H1 (cell line): ENCODE measurements at regions of chr1 and their contacts with region 1.

Region 1: GRCh38 chr1:43763497-43763973 is 56.2 kb downstream of the ST3GAL3 start:
- DNase-seq: peak; percentile 39 to 63
- H3K4me3 ChIP-seq: no peak overlapping the region
- H3K27ac ChIP-seq: no peak overlapping the region
- H3K4me1 ChIP-seq: peaks cover 7 to 24% (median 21%) of the 10 kb centered on the region in 4 experiments
- H3K27me3 ChIP-seq: no peaks in the 10 kb centered on the region
- CTCF ChIP-seq: peak; percentile 26 to 93 (median 90)
- EP300 ChIP-seq: no peak
- POLR2A ChIP-seq: no peak
- RAD21 ChIP-seq: peak; percentile 99

Region 2: DNA sequence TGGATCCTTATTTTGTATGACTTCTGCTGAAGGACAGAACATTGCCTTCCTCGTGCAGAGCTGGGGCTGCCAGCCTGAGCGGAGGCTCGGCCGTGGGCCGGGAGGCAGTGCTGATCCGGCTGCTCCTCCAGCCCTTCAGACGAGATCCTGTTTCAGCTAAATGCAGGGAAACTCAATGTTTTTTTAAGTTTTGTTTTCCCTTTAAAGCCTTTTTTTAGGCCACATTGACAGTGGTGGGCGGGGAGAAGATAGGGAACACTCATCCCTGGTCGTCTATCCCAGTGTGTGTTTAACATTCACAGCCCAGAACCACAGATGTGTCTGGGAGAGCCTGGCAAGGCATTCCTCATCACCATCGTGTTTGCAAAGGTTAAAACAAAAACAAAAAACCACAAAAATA is 141.1 kb before region 1 on chr1:
- CTCF ChIA-PET with region 1: no interaction called
- POLR2A ChIA-PET with region 1: no interaction called
- DNase-seq: no peak
- H3K4me3 ChIP-seq: no peak overlapping the region
- H3K27ac ChIP-seq: no peak overlapping the region
- H3K4me1 ChIP-seq: no peaks in the 10 kb centered on the region
- H3K27me3 ChIP-seq: no peaks in the 10 kb centered on the region
- CTCF ChIP-seq: no peak
- EP300 ChIP-seq: no peak
- POLR2A ChIP-seq: no peak
- RAD21 ChIP-seq: no peak

Region 3: GRCh38 chr1:43659212-43660166 is 104.0 kb before region 1 on chr1:
- CTCF ChIA-PET with region 1: no interaction called
- POLR2A ChIA-PET with region 1: no interaction called
- DNase-seq: peak in 1 of 2 experiments; percentile 57
- H3K4me3 ChIP-seq: peak overlapping the region in 1 of 4 experiments; percentile 37; a peak in 2 of 8 replicates
- H3K27ac ChIP-seq: peak overlapping the region; percentile 55
- H3K4me1 ChIP-seq: peaks cover 3 to 14% (median 11%) of the 10 kb centered on the region in 4 experiments; a peak in 6 of 7 replicates
- H3K27me3 ChIP-seq: no peaks in the 10 kb centered on the region
- CTCF ChIP-seq: no peak
- EP300 ChIP-seq: no peak
- POLR2A ChIP-seq: no peak
- RAD21 ChIP-seq: no peak; a peak in 1 of 4 replicates

Region 4: GRCh38 chr1:43750083-43750482 is 13.5 kb before region 1 on chr1:
- CTCF ChIA-PET with region 1: interaction called, 19 read pairs
- POLR2A ChIA-PET with region 1: interaction called, 3 read pairs
- DNase-seq: no peak
- H3K4me3 ChIP-seq: no peak overlapping the region
- H3K27ac ChIP-seq: no peak overlapping the region
- H3K4me1 ChIP-seq: no peaks in the 10 kb centered on the region
- H3K27me3 ChIP-seq: no peaks in the 10 kb centered on the region
- CTCF ChIP-seq: no peak
- EP300 ChIP-seq: no peak
- POLR2A ChIP-seq: no peak
- RAD21 ChIP-seq: no peak

Region 5: DNA sequence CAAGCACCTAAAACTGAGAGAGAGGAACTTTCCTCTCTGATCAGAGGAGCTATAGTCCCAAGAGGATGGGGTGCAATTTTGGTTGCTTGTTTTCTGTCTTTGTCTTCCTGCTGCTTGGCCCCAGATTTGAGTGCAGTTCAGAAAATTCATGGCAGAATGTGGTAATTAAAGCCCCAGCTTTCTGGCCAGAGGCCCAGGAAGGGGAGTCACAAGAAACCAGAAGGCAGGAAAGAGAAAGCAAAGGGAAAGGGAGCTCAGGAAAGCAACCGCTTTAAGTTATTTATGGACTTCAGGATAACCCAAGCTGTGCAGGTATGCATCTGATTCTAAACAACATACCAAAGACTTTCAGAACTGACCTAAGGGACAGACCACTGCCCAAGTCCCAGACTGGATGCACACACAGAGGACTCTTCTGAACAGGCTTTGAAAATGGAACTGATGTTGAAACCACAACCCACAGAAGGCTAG is 32.6 kb after region 1 on chr1:
- CTCF ChIA-PET with region 1: interaction called, 11 read pairs
- POLR2A ChIA-PET with region 1: interaction called, 3 read pairs
- DNase-seq: no peak
- H3K4me3 ChIP-seq: no peak overlapping the region
- H3K27ac ChIP-seq: no peak overlapping the region
- H3K4me1 ChIP-seq: no peaks in the 10 kb centered on the region
- H3K27me3 ChIP-seq: no peaks in the 10 kb centered on the region
- CTCF ChIP-seq: no peak
- EP300 ChIP-seq: no peak
- POLR2A ChIP-seq: no peak
- RAD21 ChIP-seq: no peak

Region 6: GRCh38 chr1:43806183-43806582 is 42.6 kb after region 1 on chr1:
- CTCF ChIA-PET with region 1: no interaction called
- POLR2A ChIA-PET with region 1: no interaction called
- DNase-seq: no peak
- H3K4me3 ChIP-seq: no peak overlapping the region
- H3K27ac ChIP-seq: no peak overlapping the region
- H3K4me1 ChIP-seq: peaks cover 0 to 4% (median 0%) of the 10 kb centered on the region in 4 experiments; a peak in 3 of 7 replicates
- H3K27me3 ChIP-seq: no peaks in the 10 kb centered on the region
- CTCF ChIP-seq: no peak
- EP300 ChIP-seq: no peak
- POLR2A ChIP-seq: no peak
- RAD21 ChIP-seq: no peak

Region 7: GRCh38 chr1:43881415-43881814 is 117.9 kb after region 1 on chr1:
- CTCF ChIA-PET with region 1: interaction called, 11 read pairs
- POLR2A ChIA-PET with region 1: interaction called, 4 read pairs
- DNase-seq: no peak
- H3K4me3 ChIP-seq: no peak overlapping the region
- H3K27ac ChIP-seq: no peak overlapping the region
- H3K4me1 ChIP-seq: peaks cover 7 to 17% (median 12%) of the 10 kb centered on the region in 4 experiments
- H3K27me3 ChIP-seq: no peaks in the 10 kb centered on the region; a peak in 1 of 7 replicates
- CTCF ChIP-seq: peak; percentile 2 to 40 (median 2); a peak in 2 of 4 replicates
- EP300 ChIP-seq: no peak
- POLR2A ChIP-seq: no peak
- RAD21 ChIP-seq: peak in 1 of 2 experiments; percentile 39; a peak in 2 of 4 replicates

Region 8: DNA sequence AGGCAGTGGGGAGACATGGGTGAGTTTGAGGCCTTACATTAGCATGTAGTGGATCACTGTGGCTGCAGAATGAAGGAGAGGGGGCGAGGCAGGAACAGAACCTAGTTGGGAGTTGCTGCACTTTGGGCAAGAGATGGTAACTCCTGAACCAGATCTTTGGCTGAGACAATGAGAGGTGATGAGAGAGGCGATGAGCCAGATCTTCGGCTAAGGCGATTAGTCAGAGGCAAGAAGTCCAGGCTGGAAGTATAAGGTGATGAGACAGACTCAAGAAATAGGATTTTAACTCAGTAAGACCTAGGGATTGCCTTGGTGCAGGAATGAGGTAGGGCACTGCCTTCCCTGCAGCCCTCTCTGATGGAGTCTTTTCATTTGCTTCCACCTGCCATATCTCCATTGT is 161.0 kb after region 1 on chr1:
- CTCF ChIA-PET with region 1: interaction called, 618 read pairs
- POLR2A ChIA-PET with region 1: interaction called, 89 read pairs
- DNase-seq: no peak
- H3K4me3 ChIP-seq: no peak overlapping the region
- H3K27ac ChIP-seq: no peak overlapping the region
- H3K4me1 ChIP-seq: no peaks in the 10 kb centered on the region
- H3K27me3 ChIP-seq: no peaks in the 10 kb centered on the region
- CTCF ChIP-seq: no peak
- EP300 ChIP-seq: no peak
- POLR2A ChIP-seq: no peak
- RAD21 ChIP-seq: no peak

Region 9: DNA sequence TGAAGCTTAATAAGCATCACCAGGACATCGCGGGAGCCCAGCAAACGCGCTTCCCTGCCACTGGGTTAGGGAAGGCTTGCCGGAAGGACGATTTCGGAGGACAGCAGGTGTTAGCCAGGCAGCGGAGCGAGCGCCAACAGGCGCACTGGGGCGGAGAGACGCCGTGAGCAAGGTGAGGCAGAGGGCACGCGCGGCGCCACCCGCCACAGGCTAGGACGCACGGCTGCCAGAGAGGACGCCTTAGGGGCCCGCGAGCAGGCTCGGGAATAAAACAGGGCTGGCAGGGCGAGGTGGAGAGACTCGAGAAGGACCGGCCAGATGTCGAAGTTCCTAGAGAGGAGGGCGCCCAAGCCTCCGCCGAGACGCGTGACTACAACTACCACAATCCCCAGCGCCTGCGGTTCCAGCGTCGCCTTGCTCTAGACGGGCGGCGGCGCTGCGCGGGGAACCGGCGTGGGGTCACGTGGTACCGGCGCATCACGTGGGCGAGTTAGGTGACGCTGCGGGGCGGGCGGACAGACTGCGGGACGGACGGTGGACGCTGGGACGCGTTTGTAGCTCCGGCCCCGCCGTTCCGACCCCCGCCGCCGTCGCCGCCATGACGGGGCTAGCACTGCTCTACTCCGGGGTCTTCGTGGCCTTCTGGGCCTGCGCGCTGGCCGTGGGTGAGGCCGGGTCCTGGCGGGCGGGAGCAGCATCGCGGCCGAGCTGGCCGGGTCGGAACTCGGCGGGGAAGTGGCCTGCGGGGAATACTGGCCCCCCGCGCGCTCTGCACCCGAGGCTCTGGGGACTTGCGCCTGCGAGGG is 211.1 kb after region 1 on chr1 and contains the start of gene ATP6V0B:
- CTCF ChIA-PET with region 1: interaction called, 29 read pairs
- POLR2A ChIA-PET with region 1: interaction called, 3 read pairs
- DNase-seq: peak; percentile 69 to 97
- H3K4me3 ChIP-seq: peak within 1 kb of the TSS; percentile 79 to 88 (median 82)
- H3K27ac ChIP-seq: peak within 1 kb of the TSS; percentile 85
- H3K4me1 ChIP-seq: peaks cover 6 to 18% (median 12%) of the 10 kb centered on the region in 4 experiments
- H3K27me3 ChIP-seq: no peaks in the 10 kb centered on the region
- CTCF ChIP-seq: peak in 1 of 3 experiments; percentile 3; a peak in 2 of 4 replicates
- EP300 ChIP-seq: no peak
- POLR2A ChIP-seq: peak in 1 of 2 experiments; percentile 73; a peak in 2 of 3 replicates
- RAD21 ChIP-seq: no peak
- total RNA-seq, gene ATP6V0B: 105 and 106 TPM in 2 replicates